Adrenal gland (tissue), 19 donors: ENCODE measurements at regions of chr4 and their contacts with region 1.

Region 1: GRCh38 chr4:40840985-40841571 is 91.3 kb downstream of the NSUN7 start:
- DNase-seq: peak; percentile 68 to 90 (median 85)
- H3K4me3 ChIP-seq: no peak overlapping the region
- H3K27ac ChIP-seq: no peak overlapping the region
- H3K4me1 ChIP-seq: no peaks in the 10 kb centered on the region
- H3K27me3 ChIP-seq: no peaks in the 10 kb centered on the region
- CTCF ChIP-seq: peak; percentile 42 to 67 (median 62)
- POLR2A ChIP-seq: no peak

Region 2: GRCh38 chr4:40446839-40447238 is 394.2 kb before region 1 on chr4:
- intact Hi-C with region 1: no loop called
- DNase-seq: no peak
- H3K4me3 ChIP-seq: no peak overlapping the region
- H3K27ac ChIP-seq: no peak overlapping the region
- H3K4me1 ChIP-seq: peaks cover 0 to 16% of the 10 kb centered on the region in 2 donors
- H3K27me3 ChIP-seq: no peaks in the 10 kb centered on the region
- CTCF ChIP-seq: no peak
- POLR2A ChIP-seq: no peak

Region 3: DNA sequence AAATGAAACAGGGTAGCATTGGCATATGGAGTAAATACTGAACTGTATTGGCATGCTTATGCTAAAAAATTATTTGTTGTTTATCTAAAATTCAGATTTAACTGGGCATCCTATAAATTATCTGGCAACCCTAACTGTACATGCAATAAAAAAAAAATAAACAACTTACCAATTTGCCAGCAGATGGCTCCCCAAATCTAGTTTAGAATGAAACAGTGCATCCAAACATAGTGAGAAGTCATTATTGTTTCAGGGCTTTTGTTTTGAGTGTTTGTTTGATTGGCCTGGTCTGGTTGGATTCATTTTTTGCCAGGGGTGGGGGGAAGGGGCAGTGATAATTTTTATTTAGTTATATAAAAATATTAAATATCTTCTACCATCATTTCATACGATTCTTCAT is 104.2 kb before region 1 on chr4:
- intact Hi-C with region 1: no loop called
- DNase-seq: no peak
- H3K4me3 ChIP-seq: no peak overlapping the region
- H3K27ac ChIP-seq: no peak overlapping the region
- H3K4me1 ChIP-seq: peaks cover 2% of the 10 kb centered on the region in 2 donors
- H3K27me3 ChIP-seq: no peaks in the 10 kb centered on the region
- CTCF ChIP-seq: peak; percentile 10 to 57 (median 38)
- POLR2A ChIP-seq: no peak

Region 4: GRCh38 chr4:40887288-40888131 is 46.4 kb after region 1 on chr4:
- intact Hi-C with region 1: loop called in 1 of 2 experiments (anchors 5 kb)
- DNase-seq: peak in 2 of 7 donors; percentile 8 to 61
- H3K4me3 ChIP-seq: no peak overlapping the region
- H3K27ac ChIP-seq: no peak overlapping the region
- H3K4me1 ChIP-seq: no peaks in the 10 kb centered on the region
- H3K27me3 ChIP-seq: no peaks in the 10 kb centered on the region
- CTCF ChIP-seq: no peak
- POLR2A ChIP-seq: no peak